ENCODE measurements at regions of chrX and their contacts with region 1.

Region 1: GRCh38 chrX:85922821-85923220 is 124.5 kb downstream of the CHM start:
- DNase-seq: no peak
- ATAC-seq: no peak
- H3K4me3 ChIP-seq: no peak overlapping the region
- H3K27ac ChIP-seq: no peak overlapping the region
- H3K4me1 ChIP-seq: no peaks in the 10 kb centered on the region
- H3K27me3 ChIP-seq: no peaks in the 10 kb centered on the region
- CTCF ChIP-seq: no peak
- EP300 ChIP-seq: no peak
- POLR2A ChIP-seq: no peak
- RAD21 ChIP-seq: no peak

Region 2: DNA sequence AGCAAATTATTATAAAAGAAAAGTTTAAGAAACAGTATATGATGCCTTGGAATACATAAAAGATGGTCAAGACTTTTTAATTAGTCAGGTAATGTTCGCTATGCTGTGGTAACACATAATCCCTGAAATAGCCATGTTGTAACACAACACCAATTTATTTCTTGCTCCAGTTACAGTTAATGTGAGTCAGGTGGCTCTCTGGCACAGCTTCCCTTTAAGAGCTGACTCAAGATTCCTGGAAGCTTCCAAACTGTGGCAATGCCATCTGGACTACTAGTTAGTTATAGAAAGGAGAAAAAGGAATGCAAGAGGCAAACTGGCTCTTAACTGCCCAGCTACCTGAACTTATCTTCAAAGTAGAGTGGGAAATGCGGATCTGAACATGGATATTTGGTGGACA is 86.0 kb before region 1 on chrX:
- CTCF ChIA-PET with region 1: no interaction called
- POLR2A ChIA-PET with region 1: no interaction called
- RAD21 ChIA-PET with region 1: no interaction called
- SMC1A ChIA-PET with region 1: no interaction called
- in situ Hi-C with region 1: no loop called
- intact Hi-C with region 1: no loop called
- DNase-seq: no peak
- ATAC-seq: no peak
- H3K4me3 ChIP-seq: no peak overlapping the region
- H3K27ac ChIP-seq: no peak overlapping the region
- H3K4me1 ChIP-seq: no peaks in the 10 kb centered on the region
- H3K27me3 ChIP-seq: no peaks in the 10 kb centered on the region
- CTCF ChIP-seq: no peak
- EP300 ChIP-seq: no peak
- POLR2A ChIP-seq: no peak
- RAD21 ChIP-seq: no peak

Region 3: DNA sequence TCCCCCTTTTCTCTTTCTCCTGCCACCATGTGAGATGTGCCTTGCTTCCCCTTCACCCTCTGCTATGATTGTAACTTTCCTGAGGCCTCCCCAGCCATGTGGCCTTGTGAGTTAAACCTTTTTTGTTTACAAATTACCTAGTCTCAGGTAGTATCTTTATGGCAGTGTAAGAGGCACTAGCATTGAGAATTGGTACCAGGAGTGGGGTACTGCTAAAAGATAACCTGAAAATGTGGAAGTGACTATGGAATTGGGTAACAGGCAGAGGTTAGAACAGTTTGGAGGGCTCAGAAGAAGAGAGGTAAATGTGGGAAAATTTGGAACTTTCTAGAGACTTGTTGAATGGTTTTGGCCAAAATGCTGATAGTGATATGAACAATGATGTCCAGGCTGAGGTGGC is 57.5 kb before region 1 on chrX:
- CTCF ChIA-PET with region 1: no interaction called
- POLR2A ChIA-PET with region 1: no interaction called
- RAD21 ChIA-PET with region 1: no interaction called
- SMC1A ChIA-PET with region 1: no interaction called
- in situ Hi-C with region 1: no loop called
- intact Hi-C with region 1: no loop called
- DNase-seq: no peak
- ATAC-seq: no peak
- H3K4me3 ChIP-seq: no peak overlapping the region
- H3K27ac ChIP-seq: no peak overlapping the region
- H3K4me1 ChIP-seq: no peaks in the 10 kb centered on the region
- H3K27me3 ChIP-seq: no peaks in the 10 kb centered on the region
- CTCF ChIP-seq: no peak
- EP300 ChIP-seq: no peak
- POLR2A ChIP-seq: no peak
- RAD21 ChIP-seq: no peak

Region 4: DNA sequence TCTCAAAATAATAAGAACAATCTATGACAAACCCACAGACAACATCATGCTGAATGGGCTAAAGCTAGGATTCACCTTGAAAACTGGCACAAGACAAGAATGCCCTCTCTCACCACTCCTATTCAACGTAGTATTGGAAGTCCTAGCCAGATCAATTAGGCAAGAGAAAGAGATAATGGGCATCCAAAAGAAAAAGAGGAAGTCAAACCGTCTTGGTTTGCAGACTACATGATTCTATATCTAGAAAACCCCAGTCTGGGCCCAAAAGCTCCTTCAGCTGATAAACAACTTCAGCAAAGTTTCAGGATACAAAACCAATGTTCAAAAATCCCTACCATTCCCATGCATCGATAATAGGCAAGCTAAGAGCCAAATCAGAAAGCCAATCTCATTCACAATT is 65.5 kb after region 1 on chrX:
- CTCF ChIA-PET with region 1: no interaction called
- POLR2A ChIA-PET with region 1: no interaction called
- RAD21 ChIA-PET with region 1: no interaction called
- SMC1A ChIA-PET with region 1: no interaction called
- in situ Hi-C with region 1: loop called (anchors 10 kb)
- intact Hi-C with region 1: no loop called
- DNase-seq: no peak
- ATAC-seq: no peak
- H3K4me3 ChIP-seq: no peak overlapping the region
- H3K27ac ChIP-seq: no peak overlapping the region
- H3K4me1 ChIP-seq: no peaks in the 10 kb centered on the region
- H3K27me3 ChIP-seq: no peaks in the 10 kb centered on the region
- CTCF ChIP-seq: no peak
- EP300 ChIP-seq: no peak
- POLR2A ChIP-seq: no peak
- RAD21 ChIP-seq: no peak

Measured in GM12878 (cell line).